Heart right ventricle (tissue), 16 donors: ENCODE measurements at regions of chr1 and their contacts with region 1.

Region 1: DNA sequence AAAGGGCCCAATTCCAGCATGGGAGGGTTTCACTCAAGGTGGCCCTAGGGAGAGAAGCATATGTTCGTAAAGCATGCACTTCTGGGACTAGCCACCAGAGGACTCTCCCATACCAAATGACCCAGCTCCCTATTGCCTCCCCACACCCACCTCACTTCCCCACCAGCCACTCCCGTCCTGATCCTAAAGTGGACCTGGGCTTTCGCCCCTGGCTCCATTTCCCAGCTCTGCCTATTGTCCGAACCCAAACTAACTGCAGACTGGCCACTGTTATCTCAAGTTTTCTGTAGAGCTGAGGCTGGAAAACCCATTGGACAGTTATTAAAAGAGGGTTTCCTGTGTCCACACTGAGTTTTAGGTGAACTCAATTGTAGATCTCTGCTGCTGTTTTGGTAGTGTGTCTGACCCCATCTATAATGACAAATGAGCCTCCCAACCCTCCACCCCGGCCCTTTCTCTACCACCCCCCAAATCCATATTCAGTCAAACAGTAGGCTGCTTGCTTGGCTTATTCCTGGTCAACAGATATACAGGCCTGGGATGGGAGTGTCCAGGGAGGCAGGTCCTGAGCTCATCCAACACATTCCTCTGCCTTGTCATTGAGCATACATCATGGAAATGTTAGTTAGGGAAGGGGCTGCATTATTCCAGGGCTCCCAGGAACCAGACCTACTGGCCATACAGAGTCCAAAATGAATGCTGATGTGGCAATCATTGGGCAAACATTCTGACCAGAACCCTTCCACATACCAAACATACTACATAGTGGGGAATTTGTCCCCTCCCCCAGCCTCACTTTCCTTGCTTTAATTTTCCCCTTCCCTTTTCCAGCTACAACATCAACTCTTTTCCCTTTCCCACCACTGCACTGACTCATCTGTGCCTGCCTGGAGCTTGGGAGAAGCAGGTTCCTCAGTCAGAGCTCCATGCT is 59.2 kb downstream of the ABCA4 start:
- DNase-seq: peak; percentile 53 to 85
- ATAC-seq: peak; percentile 65 to 91 (median 84)
- H3K4me3 ChIP-seq: no peak overlapping the region
- H3K27ac ChIP-seq: peak overlapping the region in 9 of 10 donors; percentile 33 to 81 (median 62)
- H3K4me1 ChIP-seq: peaks cover 0 to 77% (median 49%) of the 10 kb centered on the region in 9 donors
- H3K27me3 ChIP-seq: peaks cover 0 to 9% (median 0%) of the 10 kb centered on the region in 7 donors
- CTCF ChIP-seq: peak; percentile 81 to 94 (median 89)

Region 2: DNA sequence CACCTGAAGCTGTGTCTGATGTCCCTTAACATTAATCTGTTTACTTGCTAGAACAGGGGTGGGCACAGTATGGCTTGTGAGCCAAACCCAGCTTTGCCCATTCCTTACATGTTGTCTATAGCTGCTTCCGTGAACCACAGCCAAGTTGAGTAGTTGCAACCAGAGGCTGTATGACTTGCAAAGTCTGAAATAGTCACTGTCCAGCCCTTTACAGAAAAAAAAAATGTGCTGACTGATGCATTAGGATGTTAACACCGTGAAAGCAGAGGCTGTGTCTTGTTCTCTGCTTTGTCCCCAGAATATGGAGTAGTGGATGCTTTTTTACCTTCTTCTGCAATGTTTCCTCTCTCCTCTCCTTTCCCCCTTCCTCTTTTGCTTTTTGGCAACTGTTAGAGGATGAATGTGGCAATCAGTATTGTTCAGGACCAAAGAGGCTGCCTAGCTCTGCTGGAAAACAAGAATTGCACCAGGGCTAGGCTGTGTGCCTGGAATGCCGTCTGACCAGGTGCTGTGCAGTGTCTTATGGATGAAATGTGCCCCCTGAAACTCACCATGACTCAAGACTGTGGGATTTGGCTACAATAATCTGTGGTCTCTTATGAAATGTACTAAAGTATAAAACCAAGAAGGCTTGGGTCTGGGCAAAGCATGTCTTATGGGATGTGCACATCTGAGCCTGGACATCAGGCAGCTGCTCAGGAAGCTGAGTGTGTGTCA is 73.0 kb before region 1 on chr1:
- intact Hi-C with region 1: no loop called
- DNase-seq: no peak
- ATAC-seq: no peak
- H3K4me3 ChIP-seq: no peak overlapping the region
- H3K27ac ChIP-seq: no peak overlapping the region
- H3K4me1 ChIP-seq: peaks cover 0 to 25% (median 0%) of the 10 kb centered on the region in 9 donors
- H3K27me3 ChIP-seq: peaks cover 0 to 17% (median 0%) of the 10 kb centered on the region in 7 donors
- CTCF ChIP-seq: no peak

Region 3: DNA sequence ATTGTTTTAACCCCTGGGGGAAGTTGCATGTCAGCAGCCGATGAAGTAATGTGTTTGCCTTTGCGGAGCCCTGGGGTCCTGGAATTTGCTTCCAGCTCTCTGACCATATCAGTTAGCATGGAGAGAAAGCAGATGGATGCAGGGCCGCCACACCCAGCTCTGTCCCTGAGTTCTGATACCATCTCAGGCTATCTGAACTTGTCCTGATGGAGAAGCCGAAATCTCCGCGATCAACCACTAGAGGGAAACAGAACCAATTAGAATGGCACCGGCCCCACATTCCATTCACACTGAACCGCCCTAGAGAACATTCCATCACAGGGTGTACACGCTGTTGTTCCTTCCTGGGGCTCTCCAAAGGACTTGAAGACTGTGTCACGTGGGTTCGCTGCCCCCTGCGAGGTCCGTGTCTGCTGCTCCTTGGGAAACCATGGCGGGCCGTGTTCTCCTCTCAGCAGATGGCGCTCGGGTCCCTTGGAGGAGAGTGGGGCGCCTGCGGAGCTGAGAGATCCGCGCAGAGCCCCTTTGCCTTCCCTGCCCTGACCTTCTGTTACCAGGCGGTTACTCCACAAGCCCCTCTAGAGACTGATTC is 16.2 kb before region 1 on chr1:
- intact Hi-C with region 1: loop called in 1 of 10 experiments (anchors 2 kb)
- DNase-seq: peak; percentile 88 to 94
- ATAC-seq: peak; percentile 88 to 95 (median 92)
- H3K4me3 ChIP-seq: peak overlapping the region in 5 of 10 donors; percentile 8 to 21 (median 12)
- H3K27ac ChIP-seq: peak overlapping the region; percentile 81 to 98 (median 92)
- H3K4me1 ChIP-seq: peaks cover 23 to 85% (median 64%) of the 10 kb centered on the region in 9 donors
- H3K27me3 ChIP-seq: no peaks in the 10 kb centered on the region
- CTCF ChIP-seq: peak; percentile 50 to 89 (median 73)

Region 4: GRCh38 chr1:94180650-94181049 is 118.9 kb after region 1 on chr1:
- intact Hi-C with region 1: loop called in 3 of 10 experiments (anchors 5 to 10 kb)
- DNase-seq: no peak
- ATAC-seq: no peak
- H3K4me3 ChIP-seq: no peak overlapping the region
- H3K27ac ChIP-seq: peak overlapping the region in 2 of 10 donors; percentile 38 to 68
- H3K4me1 ChIP-seq: peaks cover 0 to 43% (median 28%) of the 10 kb centered on the region in 9 donors
- H3K27me3 ChIP-seq: no peaks in the 10 kb centered on the region
- CTCF ChIP-seq: no peak

Region 5: DNA sequence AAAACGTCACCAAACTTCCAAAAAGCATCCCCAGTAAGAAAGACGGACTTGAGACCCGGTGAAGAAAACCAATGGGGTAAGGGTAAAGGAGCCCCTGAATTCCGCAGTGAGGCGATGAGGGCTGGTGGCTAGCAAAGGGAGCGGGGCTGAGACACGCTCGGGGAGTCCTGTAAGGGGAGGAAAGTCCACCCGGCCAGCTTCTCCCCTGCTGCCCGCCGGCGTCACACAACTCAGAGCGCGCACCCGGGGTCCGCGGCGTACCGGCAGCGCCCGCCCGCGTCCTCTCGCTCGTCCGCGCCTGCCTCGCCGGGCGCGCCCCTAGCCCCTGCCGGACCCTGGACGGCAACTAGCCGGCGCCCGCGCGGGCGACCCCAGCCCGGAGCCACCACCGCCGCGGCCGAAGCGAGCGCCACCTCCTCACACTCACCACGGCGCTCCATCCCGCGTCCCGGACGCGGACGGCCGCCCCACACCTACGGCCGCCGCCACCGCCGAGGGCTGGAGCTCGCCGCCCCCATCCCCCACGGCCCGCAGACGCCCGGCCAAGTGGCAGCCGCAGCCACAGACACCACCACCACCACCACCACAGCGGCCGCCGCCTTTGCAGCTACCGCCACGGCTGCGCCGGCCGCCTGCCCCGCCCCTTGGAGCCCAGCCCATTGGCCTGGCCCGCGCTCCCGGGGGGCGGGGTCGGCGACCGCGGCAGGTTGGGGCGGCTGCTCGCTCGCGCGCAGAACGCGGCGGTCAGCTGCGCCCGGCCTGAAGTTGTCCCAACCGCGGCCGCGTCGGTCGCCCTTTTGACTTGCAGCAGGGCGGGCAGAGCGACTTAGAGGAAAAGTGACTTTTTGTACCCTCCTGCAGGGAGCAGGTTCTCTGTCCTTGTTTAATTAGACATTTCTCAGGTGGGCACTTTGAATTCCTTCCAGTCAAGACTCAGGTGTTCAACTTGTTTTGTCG is 185.6 kb after region 1 on chr1:
- intact Hi-C with region 1: loop called in 1 of 10 experiments (anchors 5 kb)
- DNase-seq: peak; percentile 81 to 89
- ATAC-seq: peak; percentile 87 to 97 (median 94)
- H3K4me3 ChIP-seq: peak overlapping the region; percentile 57 to 88 (median 68)
- H3K27ac ChIP-seq: peak overlapping the region; percentile 84 to 96 (median 90)
- H3K4me1 ChIP-seq: peaks cover 0 to 15% (median 6%) of the 10 kb centered on the region in 9 donors
- H3K27me3 ChIP-seq: peaks cover 0 to 65% (median 0%) of the 10 kb centered on the region in 7 donors
- CTCF ChIP-seq: peak in 1 of 9 donors; percentile 6

Region 6: GRCh38 chr1:94335950-94336349 is 274.2 kb after region 1 on chr1:
- intact Hi-C with region 1: loop called (anchors 1 to 5 kb)
- DNase-seq: peak; percentile 18 to 86
- ATAC-seq: peak; percentile 73 to 94 (median 90)
- H3K4me3 ChIP-seq: peak overlapping the region in 1 of 10 donors; percentile 14
- H3K27ac ChIP-seq: peak overlapping the region in 5 of 10 donors; percentile 7 to 77 (median 69)
- H3K4me1 ChIP-seq: peaks cover 0 to 30% (median 16%) of the 10 kb centered on the region in 9 donors
- H3K27me3 ChIP-seq: no peaks in the 10 kb centered on the region
- CTCF ChIP-seq: peak; percentile 75 to 99 (median 88)